ENCODE measurements at regions of chr1 and their contacts with region 1.

Region 1: DNA sequence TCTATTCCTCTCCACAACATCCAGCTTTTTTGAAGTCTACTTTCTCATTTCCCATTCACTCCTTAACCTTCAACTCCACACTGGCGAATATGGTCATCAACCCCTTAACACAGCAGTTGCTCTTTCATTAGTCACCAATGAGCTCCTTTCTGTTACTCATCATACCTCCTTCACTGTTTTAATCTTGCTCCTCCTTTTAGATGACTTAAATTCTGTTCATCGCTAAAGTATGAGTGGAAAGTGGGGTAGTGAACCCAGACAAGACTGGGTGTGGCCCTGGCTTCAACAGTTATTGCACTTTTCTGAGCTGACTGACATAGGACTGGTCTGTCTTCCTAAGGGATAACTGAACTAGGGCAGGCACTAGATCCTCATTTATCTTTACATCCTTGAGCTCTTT is 51.3 kb downstream of the AKT3 start:
- DNase-seq: no peak
- ATAC-seq: no peak
- H3K4me3 ChIP-seq: no peak overlapping the region
- H3K27ac ChIP-seq: no peak overlapping the region
- H3K4me1 ChIP-seq: no peaks in the 10 kb centered on the region
- H3K27me3 ChIP-seq: no peaks in the 10 kb centered on the region
- CTCF ChIP-seq: no peak

Region 2: GRCh38 chr1:243343970-243344937 is 454.5 kb before region 1 on chr1:
- CTCF ChIA-PET with region 1: interaction called, 14 read pairs
- POLR2A ChIA-PET with region 1: no interaction called
- in situ Hi-C with region 1: no loop called
- intact Hi-C with region 1: no loop called
- DNase-seq: peak; percentile 27
- ATAC-seq: no peak
- H3K4me3 ChIP-seq: no peak overlapping the region
- H3K27ac ChIP-seq: no peak overlapping the region
- H3K4me1 ChIP-seq: no peaks in the 10 kb centered on the region
- H3K27me3 ChIP-seq: no peaks in the 10 kb centered on the region
- CTCF ChIP-seq: peak; percentile 73; the same call in 1 of the 2 replicates

Region 3: GRCh38 chr1:243814718-243815117 is 16.0 kb after region 1 on chr1:
- CTCF ChIA-PET with region 1: interaction called, 14 read pairs
- POLR2A ChIA-PET with region 1: no interaction called
- in situ Hi-C with region 1: no loop called
- intact Hi-C with region 1: no loop called
- DNase-seq: no peak
- ATAC-seq: no peak
- H3K4me3 ChIP-seq: no peak overlapping the region
- H3K27ac ChIP-seq: no peak overlapping the region
- H3K4me1 ChIP-seq: no peaks in the 10 kb centered on the region
- H3K27me3 ChIP-seq: no peaks in the 10 kb centered on the region
- CTCF ChIP-seq: no peak

Region 4: DNA sequence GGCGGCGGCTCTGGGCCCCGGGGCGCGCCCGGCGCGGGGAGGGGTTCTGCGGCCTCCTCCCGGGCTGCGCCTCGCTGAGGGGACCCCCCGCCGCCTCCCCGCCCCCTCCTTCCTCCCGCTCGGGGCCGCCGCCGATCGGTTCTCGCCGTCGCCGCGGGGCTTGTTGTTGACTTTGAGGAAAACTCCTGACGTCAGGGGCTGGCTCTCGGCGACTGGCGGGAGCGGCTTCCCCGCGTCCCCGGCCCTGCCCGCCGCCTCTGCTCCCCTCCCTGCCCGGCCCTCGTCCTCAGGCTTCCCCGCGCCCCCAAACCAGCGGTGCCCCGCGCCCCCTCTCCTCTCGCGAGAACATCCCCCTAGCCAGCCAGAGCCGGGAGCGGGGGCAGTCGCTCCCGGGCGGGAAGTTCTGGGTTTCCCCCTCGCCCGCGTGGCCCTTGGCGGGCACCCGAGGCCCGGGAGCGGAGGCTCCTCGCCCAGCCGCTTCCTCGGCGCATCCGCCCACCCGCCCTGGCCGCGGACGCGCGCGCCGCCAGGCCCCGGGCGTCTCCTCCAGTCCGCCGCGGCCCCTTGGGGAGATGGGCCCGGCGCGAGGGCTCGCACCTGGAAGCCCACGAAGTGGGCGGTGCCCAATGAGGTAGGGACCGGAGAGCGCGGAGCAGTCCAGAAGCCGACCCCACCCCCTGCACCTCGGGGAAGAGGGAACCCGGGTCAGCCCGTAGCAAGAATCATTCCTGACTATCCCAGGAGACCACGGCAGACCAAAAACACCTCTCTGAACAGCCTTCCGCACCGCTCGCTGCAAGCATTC is 51.9 kb after region 1 on chr1:
- CTCF ChIA-PET with region 1: no interaction called
- POLR2A ChIA-PET with region 1: no interaction called
- in situ Hi-C with region 1: no loop called
- intact Hi-C with region 1: no loop called
- DNase-seq: no peak
- ATAC-seq: peak; percentile 81
- H3K4me3 ChIP-seq: peak overlapping the region; percentile 58 to 60
- H3K27ac ChIP-seq: no peak overlapping the region
- H3K4me1 ChIP-seq: peaks cover 5% of the 10 kb centered on the region
- H3K27me3 ChIP-seq: peaks cover 31% of the 10 kb centered on the region
- CTCF ChIP-seq: no peak

Measured in Panc1 (cell line).